Left lung (tissue), 14 donors: ENCODE measurements at regions of chr16 and their contacts with region 1.

Region 1: DNA sequence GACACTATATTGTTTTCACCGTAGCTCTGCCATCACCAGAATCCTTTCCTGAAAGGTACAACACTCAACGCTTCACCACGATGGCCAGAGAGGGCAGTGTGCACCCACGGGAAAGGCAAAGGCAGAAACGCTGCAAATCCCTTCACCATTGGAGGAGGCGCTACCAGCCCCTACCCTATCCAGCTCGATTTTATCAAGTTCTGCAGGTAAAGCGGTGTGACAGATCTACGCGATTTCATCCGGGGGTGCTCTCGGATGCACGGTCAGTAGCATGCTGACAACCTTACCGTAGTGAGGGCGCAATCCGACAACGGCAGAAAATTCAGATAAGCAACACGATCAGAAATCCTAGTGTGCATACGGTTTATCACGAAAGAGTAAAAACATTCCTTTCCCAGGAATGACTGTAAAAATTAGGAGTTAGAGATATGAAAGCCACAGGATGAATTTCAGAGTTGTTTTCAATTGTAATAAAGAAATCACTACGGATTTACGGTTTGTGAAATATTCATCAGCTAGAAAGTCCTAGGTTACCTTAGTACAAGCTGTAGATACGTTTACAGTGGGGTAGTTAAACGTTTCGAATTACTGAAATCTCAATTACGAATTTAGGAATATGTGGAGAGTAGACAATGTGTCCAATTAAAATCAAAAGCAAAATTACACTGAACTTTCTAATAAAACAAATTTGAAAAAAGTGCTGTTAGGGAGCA is 1.8 kb downstream of the NETO2 start:
- DNase-seq: peak; percentile 65 to 89 (median 85)
- ATAC-seq: peak; percentile 92
- H3K4me3 ChIP-seq: peak overlapping the region; percentile 48 to 61
- H3K27ac ChIP-seq: peak overlapping the region; percentile 40 to 66
- H3K4me1 ChIP-seq: peaks cover 0 to 30% of the 10 kb centered on the region in 2 donors
- H3K27me3 ChIP-seq: peaks cover 0 to 37% of the 10 kb centered on the region in 2 donors
- CTCF ChIP-seq: peak; percentile 85 to 88

Region 2: DNA sequence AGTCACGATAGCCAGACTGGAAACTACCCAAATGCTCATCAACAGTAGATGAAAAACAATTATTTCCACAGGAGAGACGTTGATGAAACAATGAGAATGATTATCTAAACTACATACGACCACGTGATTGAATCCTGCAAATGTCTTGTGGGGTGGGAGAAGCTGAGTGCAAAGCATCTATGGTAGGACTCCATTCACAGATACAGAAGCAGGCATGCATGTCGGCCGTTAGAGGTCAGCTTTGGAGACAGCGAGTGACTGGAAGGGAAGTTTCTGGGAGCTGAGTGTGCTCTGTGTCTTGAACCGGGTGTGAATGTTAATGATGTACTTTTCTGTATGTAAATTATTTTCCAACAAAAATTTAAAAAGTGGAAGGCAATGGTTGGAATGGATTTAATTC is 96.9 kb before region 1 on chr16:
- intact Hi-C with region 1: no loop called
- DNase-seq: no peak
- ATAC-seq: no peak
- H3K4me3 ChIP-seq: no peak overlapping the region
- H3K27ac ChIP-seq: no peak overlapping the region
- H3K4me1 ChIP-seq: peaks cover 0 to 6% of the 10 kb centered on the region in 2 donors
- H3K27me3 ChIP-seq: no peaks in the 10 kb centered on the region
- CTCF ChIP-seq: no peak

Region 3: GRCh38 chr16:48054881-48055601 is 913.1 kb after region 1 on chr16:
- intact Hi-C with region 1: loop called in 1 of 2 experiments (anchors 5 kb)
- DNase-seq: peak in 2 of 4 donors; percentile 41 to 61
- ATAC-seq: peak; percentile 93
- H3K4me3 ChIP-seq: no peak overlapping the region
- H3K27ac ChIP-seq: no peak overlapping the region
- H3K4me1 ChIP-seq: peaks cover 0 to 8% of the 10 kb centered on the region in 2 donors
- H3K27me3 ChIP-seq: peaks cover 0 to 6% of the 10 kb centered on the region in 2 donors
- CTCF ChIP-seq: peak; percentile 68 to 74

Region 4: DNA sequence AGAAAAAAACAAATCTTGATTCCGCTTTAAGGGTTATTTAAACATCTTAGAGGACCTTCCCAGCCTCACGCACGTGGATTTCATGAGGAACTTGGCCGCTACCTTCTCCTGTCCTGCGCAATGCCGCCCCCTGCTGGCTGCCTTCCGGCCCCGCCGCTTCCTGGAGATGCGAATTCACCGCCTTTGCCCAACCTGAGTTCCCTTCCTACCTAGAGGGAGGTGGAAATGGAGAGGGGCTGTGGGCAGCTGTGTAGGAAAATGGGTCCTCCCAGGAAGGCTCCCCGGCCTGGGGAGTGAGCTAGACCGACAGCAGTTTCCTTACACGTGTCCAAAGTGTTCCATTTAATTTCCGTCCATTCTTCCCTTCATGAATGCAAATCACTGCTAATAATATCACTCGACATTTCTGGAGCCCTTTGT is 1014.9 kb after region 1 on chr16:
- intact Hi-C with region 1: loop called in 1 of 2 experiments (anchors 5 kb)
- DNase-seq: peak; percentile 61 to 98 (median 84)
- ATAC-seq: peak; percentile 98
- H3K4me3 ChIP-seq: peak overlapping the region in 1 of 2 donors; percentile 8
- H3K27ac ChIP-seq: peak overlapping the region in 1 of 2 donors; percentile 6
- H3K4me1 ChIP-seq: peaks cover 0 to 14% of the 10 kb centered on the region in 2 donors
- H3K27me3 ChIP-seq: peaks cover 0 to 3% of the 10 kb centered on the region in 2 donors
- CTCF ChIP-seq: peak; percentile 89 to 94